ENCODE measurements at regions of chr6 and their contacts with region 1.

Region 1: GRCh38 chr6:153032255-153032882 is 29.9 kb upstream of the MTRF1L start:
- DNase-seq: no peak
- ATAC-seq: no peak
- H3K4me3 Mint-ChIP-seq: no peak overlapping the region
- H3K27ac Mint-ChIP-seq: no peak overlapping the region
- H3K4me1 Mint-ChIP-seq: no peaks in the 10 kb centered on the region
- H3K27me3 Mint-ChIP-seq: peaks cover 1% of the 10 kb centered on the region
- CTCF ChIP-seq: no peak

Region 2: DNA sequence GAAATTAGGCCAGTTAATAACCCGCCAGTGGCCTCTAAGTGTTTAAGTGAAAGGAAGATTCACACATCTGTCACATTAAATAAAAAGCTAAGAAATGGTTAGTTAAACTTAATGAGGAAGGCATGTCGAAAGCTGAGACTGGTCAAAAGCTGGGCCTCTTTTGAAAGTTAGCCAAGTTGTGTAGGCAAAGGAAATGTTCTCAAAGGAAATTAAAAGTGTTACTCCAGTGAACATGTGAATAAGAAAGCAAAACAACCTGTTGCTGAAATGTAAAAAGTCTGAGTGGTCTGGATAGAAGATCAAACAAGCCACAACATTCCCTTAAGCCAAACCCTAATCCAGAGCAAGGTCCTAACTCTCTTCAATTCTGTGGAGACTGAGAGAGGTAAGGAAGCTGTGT is 18.9 kb before region 1 on chr6:
- CTCF ChIA-PET with region 1: no interaction called
- POLR2A ChIA-PET with region 1: no interaction called
- intact Hi-C with region 1: no loop called
- DNase-seq: no peak
- ATAC-seq: no peak
- H3K4me3 Mint-ChIP-seq: no peak overlapping the region
- H3K27ac Mint-ChIP-seq: no peak overlapping the region
- H3K4me1 Mint-ChIP-seq: no peaks in the 10 kb centered on the region
- H3K27me3 Mint-ChIP-seq: peaks cover 22% of the 10 kb centered on the region
- CTCF ChIP-seq: no peak

Region 3: DNA sequence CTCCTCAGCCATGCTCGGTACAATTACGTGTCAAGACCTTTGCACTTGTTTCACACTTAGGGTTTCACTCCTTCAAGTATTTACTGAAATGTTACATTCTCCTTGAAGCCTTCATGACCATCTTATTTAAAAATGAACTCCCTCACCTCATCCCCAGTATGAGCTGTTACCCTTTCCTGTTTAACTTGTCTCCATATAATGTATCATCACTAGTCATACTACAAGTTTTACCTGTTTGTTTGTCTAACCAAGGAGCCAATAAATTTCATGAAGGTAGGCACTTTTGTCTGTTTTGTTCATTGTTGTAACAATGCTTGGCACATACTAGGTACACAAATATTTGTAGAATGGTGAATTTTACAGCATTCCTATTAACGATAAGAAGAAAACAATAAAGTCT is 16.3 kb after region 1 on chr6:
- CTCF ChIA-PET with region 1: no interaction called
- POLR2A ChIA-PET with region 1: no interaction called
- intact Hi-C with region 1: no loop called
- DNase-seq: no peak
- ATAC-seq: no peak
- H3K4me3 Mint-ChIP-seq: no peak overlapping the region
- H3K27ac Mint-ChIP-seq: no peak overlapping the region
- H3K4me1 Mint-ChIP-seq: no peaks in the 10 kb centered on the region
- H3K27me3 Mint-ChIP-seq: no peaks in the 10 kb centered on the region
- CTCF ChIP-seq: no peak

Region 4: DNA sequence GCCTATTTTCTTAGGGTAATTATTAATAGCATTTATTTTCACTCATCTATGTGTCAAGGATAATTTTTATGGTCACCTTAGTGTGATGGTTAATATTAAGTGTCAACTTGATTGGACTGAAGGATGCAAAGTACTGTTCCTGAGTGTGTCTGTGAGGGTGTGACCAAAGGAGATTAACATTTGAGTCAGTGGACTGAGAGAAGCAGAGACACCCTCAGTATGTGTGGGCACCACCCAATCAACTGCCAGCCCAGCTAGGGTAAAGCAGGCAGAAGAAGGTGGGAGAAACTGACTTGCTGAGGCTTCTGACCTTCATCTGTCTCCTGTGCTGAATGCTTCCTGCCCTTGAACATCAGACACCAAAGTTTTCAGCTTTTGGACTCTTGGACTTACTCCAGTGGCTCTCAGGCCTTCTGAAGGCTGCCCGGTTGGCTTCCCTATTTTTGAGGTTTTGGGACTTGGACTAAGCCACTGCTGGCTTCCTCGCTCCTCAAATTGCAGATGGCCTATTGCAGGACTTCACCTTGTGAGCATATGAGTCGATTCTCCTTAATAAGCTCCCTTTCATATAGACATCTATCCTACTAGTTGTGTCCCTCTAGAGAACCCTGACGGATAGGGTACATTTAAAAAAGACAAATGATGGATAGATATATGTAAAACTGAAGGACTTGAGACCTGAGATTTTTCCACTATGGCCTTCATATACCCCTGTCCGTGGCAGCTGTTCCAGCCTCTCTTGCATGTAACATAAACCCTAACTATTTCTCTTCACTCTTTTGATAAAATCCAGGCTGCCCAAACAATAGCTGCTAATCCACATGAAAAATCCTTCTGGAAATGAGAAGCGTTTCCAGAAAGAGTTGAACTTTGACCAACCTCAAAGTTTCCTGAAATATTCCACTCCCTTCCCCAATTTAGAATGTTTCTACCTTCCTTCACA is 160.8 kb after region 1 on chr6:
- CTCF ChIA-PET with region 1: no interaction called
- POLR2A ChIA-PET with region 1: no interaction called
- intact Hi-C with region 1: no loop called
- DNase-seq: no peak
- ATAC-seq: no peak
- H3K4me3 Mint-ChIP-seq: no peak overlapping the region
- H3K27ac Mint-ChIP-seq: no peak overlapping the region
- H3K4me1 Mint-ChIP-seq: no peaks in the 10 kb centered on the region
- H3K27me3 Mint-ChIP-seq: no peaks in the 10 kb centered on the region
- CTCF ChIP-seq: no peak

Region 5: GRCh38 chr6:153312641-153313040 is 280.3 kb after region 1 on chr6:
- CTCF ChIA-PET with region 1: interaction called, 3 read pairs
- POLR2A ChIA-PET with region 1: no interaction called
- intact Hi-C with region 1: loop called (anchors 5 kb)
- DNase-seq: peak; percentile 53
- ATAC-seq: no peak
- H3K4me3 Mint-ChIP-seq: no peak overlapping the region
- H3K27ac Mint-ChIP-seq: no peak overlapping the region
- H3K4me1 Mint-ChIP-seq: no peaks in the 10 kb centered on the region
- H3K27me3 Mint-ChIP-seq: no peaks in the 10 kb centered on the region
- CTCF ChIP-seq: peak; percentile 36

Measured in activated CD8-positive, alpha-beta T cell treated with anti-CD3 and anti-CD28 coated beads for 36 hours (primary cell).